Panc1 (cell line): ENCODE measurements at regions of chr11 and their contacts with region 1.

Region 1: DNA sequence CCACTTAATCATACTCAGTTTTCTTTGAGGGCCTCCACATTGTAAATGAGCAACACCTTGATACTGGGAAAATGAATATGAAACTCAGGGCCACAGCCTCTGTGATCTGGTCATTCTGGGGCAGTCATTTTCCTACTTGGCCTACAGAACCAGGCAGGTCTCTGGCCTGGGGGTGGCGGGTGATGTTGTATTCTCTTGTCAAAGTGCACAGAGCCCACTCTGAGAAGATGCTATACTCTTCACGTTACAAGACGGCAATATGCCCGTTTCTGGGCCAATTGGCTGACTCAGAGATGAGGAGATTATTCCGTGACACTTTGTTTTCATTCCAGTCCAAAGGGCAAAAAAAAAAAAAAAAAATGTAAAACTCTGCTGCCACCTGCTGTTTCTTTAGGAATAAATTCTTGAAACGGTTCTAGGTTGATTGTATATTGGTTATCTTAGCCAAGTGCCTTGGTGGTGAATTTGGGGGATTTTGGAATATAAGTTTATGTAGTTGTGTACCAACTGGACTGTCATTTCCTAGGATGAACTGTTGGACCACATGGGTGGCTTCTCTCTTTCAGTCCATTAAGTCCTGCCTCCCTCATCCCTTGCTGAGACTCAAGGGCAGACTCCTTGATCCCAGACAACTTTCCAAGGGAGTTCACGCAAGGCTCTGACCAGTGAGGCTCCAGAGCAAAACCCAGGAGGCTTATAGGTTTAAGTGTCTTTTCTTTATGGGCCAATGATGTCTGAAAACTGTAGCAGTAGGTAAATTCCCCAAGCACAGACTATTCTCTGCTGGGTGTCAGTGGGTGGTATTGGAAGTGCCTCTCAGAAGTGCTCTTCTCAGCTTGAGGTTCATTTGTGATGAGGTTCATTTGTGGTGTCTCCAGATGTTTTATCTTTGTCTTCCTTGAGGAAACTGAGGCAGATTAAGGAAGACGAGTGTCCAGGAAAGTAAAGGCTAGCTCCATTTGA is 18.2 kb downstream of the ADM start:
- DNase-seq: peak; percentile 90
- ATAC-seq: peak; percentile 82
- H3K4me3 ChIP-seq: peak overlapping the region in 1 of 2 experiments; percentile 36; a peak in 2 of 4 replicates
- H3K27ac ChIP-seq: peak overlapping the region; percentile 90
- H3K4me1 ChIP-seq: peaks cover 83% of the 10 kb centered on the region
- H3K27me3 ChIP-seq: no peaks in the 10 kb centered on the region
- CTCF ChIP-seq: peak; percentile 83

Region 2: GRCh38 chr11:10575346-10576034 is 252.4 kb after region 1 on chr11:
- CTCF ChIA-PET with region 1: interaction called, 17 read pairs
- POLR2A ChIA-PET with region 1: no interaction called
- in situ Hi-C with region 1: no loop called
- intact Hi-C with region 1: no loop called
- DNase-seq: no peak
- ATAC-seq: no peak
- H3K4me3 ChIP-seq: no peak overlapping the region
- H3K27ac ChIP-seq: no peak overlapping the region
- H3K4me1 ChIP-seq: no peaks in the 10 kb centered on the region
- H3K27me3 ChIP-seq: peaks cover 30% of the 10 kb centered on the region
- CTCF ChIP-seq: 0 out of 2 replicates have a peak, but pooled peaks have one; percentile 5